AG04449 (cell line): ENCODE measurements at regions of chr1 and their contacts with region 1.

Region 1: DNA sequence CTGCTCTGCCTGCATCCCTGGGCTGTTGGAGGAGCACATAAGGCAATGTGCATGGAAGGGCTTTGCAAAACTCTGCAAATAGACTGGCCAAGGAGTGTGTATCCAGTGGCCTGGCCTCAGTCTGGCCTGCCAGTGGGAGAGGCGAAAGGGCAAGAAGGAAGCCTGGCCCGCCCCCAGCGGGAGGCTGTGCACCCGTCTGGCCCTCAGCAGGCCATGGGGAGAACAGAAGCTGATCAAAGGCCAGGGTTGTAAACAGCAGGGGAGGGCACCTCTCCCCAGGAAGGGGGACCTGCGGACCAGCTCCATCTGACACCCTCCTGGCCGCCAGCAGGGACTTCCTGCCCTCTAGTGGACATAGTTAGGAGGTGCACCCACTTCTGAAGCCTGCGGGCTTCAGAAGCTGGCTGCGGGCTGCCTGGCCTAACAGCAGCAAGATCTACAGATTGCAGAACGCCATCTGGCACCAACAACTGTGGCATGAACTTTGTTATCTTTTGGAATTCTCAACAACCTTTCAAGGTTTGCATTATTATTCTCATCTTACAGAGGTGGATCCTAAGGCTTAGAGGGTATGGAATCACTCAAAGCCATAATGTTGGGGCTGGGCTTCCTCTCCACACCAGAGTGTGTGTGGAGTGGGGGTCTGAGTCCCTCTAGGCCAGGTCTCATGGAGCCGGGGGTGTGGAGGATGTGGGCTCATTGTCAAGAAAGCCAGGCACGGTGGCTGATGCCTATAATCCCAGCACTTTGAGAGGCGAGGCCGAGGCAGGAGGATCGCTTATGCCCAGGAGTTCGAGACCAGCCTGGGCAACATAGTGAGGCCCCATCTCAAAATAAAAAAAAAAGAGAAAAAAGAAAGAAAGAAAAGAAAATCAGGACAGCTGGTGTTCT is 18.9 kb upstream of the CDK18 start:
- DNase-seq: no peak
- H3K4me3 ChIP-seq: no peak overlapping the region
- CTCF ChIP-seq: peak; percentile 89

Region 2: GRCh38 chr1:205321164-205321958 is 164.2 kb before region 1 on chr1 and contains the start of gene NUAK2:
- CTCF ChIA-PET with region 1: interaction called, 95 read pairs
- POLR2A ChIA-PET with region 1: no interaction called
- DNase-seq: no peak
- H3K4me3 ChIP-seq: peak within 1 kb of the TSS; percentile 98
- CTCF ChIP-seq: peak; percentile 48

Region 3: GRCh38 chr1:205354259-205354904 is 131.2 kb before region 1 on chr1:
- CTCF ChIA-PET with region 1: interaction called, 201 read pairs
- POLR2A ChIA-PET with region 1: no interaction called
- DNase-seq: no peak
- H3K4me3 ChIP-seq: no peak overlapping the region
- CTCF ChIP-seq: peak; percentile 73

Region 4: DNA sequence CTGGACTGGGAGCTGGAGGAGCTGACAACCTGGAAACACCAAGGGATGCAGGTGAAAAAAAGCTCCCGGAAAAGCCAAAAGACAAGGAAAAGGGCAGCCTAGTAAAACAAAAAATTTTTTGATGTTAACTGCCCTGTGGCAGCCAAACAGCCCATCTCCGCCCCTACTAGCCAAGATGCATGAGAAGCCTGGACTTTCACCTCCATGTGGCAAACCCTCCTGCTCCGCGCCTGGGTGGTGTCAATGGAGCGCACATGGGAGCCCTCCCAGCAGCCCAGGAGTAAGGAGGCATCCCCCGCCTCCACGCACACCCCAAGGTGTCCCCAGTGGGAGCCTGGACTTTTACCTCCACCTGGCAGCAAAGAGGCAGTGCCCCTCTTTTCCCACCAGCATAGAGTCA is 94.2 kb before region 1 on chr1:
- CTCF ChIA-PET with region 1: interaction called, 151 read pairs
- POLR2A ChIA-PET with region 1: no interaction called
- DNase-seq: no peak
- H3K4me3 ChIP-seq: no peak overlapping the region
- CTCF ChIP-seq: no peak

Region 5: GRCh38 chr1:205422993-205423625 is 62.5 kb before region 1 on chr1:
- CTCF ChIA-PET with region 1: interaction called, 21 read pairs
- POLR2A ChIA-PET with region 1: no interaction called
- DNase-seq: no peak
- H3K4me3 ChIP-seq: no peak overlapping the region
- CTCF ChIP-seq: no peak

Region 6: DNA sequence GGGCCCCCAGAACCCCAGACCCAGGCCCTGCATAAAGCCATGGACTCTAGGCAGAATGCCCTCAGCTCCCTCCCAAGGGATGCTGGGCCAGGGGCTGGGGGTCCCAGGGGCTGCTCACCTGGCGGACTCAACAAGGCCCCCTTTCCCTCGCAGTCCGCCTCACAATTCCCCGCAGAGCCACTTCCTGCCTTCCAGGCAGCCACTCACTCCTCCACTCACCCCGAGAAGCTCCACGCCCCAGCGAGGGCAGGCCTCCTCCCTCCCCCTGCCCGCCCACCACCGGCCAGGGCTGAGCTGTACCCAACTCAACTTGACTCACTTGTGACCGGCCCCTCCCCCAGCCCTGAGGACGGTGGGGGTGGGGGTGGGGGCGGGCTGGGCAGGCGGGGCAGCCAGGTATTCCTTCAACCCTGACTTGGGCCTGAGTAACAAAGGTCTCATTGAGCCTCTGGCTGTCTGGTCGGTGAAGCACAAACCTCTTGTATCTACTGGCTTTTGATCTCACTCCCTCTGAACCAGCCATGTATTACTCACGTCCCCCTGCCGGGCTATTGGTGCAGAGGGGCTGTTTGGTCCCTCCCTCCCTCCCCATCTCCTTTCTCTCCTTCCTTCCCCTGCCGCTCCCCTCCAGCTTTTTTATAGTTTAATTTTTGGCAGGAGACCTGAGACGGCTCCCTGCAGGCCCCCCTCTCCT is 35.7 kb before region 1 on chr1:
- CTCF ChIA-PET with region 1: interaction called, 22 read pairs
- POLR2A ChIA-PET with region 1: no interaction called
- DNase-seq: no peak
- H3K4me3 ChIP-seq: no peak overlapping the region; the same call in 1 of the 2 replicates
- CTCF ChIP-seq: no peak

Region 7: GRCh38 chr1:205504311-205504984 is 18.9 kb after region 1 on chr1 and contains the start of gene CDK18:
- CTCF ChIA-PET with region 1: interaction called, 143 read pairs
- POLR2A ChIA-PET with region 1: no interaction called
- DNase-seq: no peak
- H3K4me3 ChIP-seq: peak within 1 kb of the TSS; percentile 57
- CTCF ChIP-seq: no peak